ENCODE measurements at regions of chr22 and their contacts with region 1.

Region 1: DNA sequence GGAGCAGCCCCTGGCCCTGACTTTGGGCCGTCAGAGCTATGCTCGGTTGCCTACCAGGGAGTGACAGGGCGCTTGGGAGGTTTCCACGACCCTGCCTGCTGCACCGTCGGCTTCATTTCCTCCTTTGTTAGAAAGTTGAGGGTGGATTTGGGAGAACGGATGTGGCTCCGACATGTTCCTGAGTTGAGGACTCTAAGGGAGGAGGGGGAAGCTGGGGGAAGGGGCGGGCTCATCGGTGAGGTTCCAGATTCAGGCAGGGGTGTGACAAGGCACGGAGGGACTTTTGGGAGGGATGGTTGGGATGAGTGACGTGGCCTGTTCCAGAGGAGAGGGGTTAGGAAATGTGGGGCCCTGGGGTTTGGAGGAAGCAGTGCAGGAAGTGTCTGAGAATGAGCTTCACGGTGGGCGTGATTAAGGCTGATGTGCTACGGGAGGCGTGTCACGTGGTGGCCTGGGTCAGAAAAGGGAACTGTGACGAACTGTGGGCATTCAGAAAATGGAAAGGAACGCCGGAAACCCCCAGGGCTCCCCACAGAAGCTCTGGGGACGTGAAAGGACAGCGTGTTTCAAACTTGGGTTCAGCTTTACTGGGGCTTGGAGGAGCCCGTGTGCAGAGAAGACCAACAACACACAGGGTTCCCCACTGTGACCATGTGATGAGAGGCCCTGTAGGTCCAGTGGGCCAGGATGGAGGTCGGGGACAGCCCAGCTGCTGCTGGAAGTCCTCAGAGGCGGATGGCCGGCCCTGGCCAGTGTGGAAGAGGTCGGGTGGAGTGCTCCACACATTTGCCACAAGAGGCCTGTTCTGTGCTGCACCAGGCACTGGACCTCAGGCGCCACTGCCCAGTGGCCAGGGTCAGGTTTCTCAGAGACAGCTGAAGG is 2.8 kb downstream of the PARVB start:
- DNase-seq: peak; percentile 88
- H3K4me3 ChIP-seq: peak overlapping the region in 2 of 3 experiments; percentile 18 to 52
- H3K27ac ChIP-seq: peak overlapping the region; percentile 99
- H3K4me1 ChIP-seq: peaks cover 66% of the 10 kb centered on the region
- H3K27me3 ChIP-seq: no peaks in the 10 kb centered on the region
- CTCF ChIP-seq: no peak
- POLR2A ChIP-seq: peak; percentile 70

Region 2: DNA sequence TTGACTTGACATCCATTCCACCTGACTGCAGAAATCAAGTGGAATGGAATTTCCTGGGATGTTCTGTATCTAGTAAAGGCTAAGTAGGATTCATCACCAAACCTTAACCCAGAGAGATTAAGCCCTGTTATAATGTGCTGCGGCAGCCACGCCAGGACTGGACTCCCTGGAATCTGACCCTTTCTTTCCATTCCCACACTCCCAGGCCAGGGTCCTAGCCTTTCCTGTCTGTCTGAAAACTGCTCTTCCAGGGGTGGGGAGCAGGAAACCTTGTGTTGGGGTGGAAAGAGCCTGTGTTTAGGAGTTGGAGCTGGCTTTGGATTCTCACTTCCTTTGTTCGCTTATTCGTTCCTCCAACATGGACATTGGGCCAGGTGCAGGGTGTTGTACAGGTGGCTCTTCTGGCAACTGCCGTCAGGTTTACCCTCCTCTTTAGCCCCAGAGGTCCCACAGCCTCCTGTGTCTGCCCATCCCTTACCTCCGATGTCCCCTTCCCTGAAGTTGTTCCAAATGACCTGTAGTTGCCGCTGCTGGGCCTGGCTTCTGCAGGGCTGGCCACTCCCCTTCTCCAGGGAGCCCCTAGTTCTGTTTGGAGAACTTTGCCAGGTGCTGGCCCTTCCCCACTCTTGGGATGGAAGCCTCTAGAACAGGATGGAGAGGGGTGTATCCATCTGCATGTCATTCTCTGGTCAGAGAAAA is 23.3 kb before region 1 on chr22:
- CTCF ChIA-PET with region 1: interaction called, 10 read pairs
- POLR2A ChIA-PET with region 1: no interaction called
- dilution Hi-C with region 1: no loop called
- intact Hi-C with region 1: no loop called
- DNase-seq: peak; percentile 60
- H3K4me3 ChIP-seq: no peak overlapping the region
- H3K27ac ChIP-seq: no peak overlapping the region
- H3K4me1 ChIP-seq: peaks cover 14% of the 10 kb centered on the region
- H3K27me3 ChIP-seq: no peaks in the 10 kb centered on the region
- CTCF ChIP-seq: peak; percentile 37 to 64
- POLR2A ChIP-seq: no peak

Region 3: DNA sequence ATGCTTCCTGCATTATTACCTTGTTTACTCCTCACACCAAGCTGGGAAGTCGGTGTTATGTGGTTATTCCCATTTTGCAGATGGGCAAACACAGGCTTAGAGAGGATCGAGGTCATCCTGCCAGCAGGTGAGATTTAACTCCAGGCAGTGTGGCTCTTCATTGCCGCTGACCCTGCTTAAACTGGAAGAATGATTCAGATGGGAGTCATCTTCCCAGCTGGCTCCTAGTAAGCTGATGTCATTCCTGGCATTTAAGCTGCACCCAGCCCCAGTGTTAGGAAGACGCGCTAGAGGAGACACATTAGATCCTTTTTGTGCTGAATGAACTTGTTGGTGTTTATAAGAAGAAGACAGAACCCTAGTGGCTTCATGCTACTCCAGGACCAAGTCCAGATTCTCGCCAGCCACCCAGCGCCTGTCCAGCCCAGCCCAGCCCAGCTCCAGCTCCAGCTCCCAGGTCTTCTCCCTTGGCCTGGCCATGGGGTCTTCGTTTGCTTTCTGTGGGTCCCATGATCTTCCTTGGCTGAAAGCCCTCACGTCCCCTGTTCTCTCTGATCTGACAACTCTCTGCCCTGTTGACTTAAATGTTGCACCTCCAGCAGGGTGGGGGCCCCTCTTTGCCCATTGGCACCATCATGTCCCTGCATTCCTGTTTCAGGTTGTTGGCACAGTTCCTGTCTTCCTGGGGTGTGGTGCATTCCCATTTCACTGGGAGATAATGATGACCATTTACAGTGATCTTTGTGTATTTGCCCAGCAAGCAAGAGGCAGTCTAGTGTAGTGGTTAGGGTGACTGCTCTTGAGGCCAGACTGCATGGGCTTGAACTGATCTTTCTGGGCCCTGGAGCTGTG is 10.9 kb after region 1 on chr22:
- CTCF ChIA-PET with region 1: interaction called, 12 read pairs
- POLR2A ChIA-PET with region 1: interaction called, 3 read pairs
- dilution Hi-C with region 1: no loop called
- intact Hi-C with region 1: no loop called
- DNase-seq: peak; percentile 85
- H3K4me3 ChIP-seq: no peak overlapping the region
- H3K27ac ChIP-seq: peak overlapping the region; percentile 54
- H3K4me1 ChIP-seq: peaks cover 16% of the 10 kb centered on the region
- H3K27me3 ChIP-seq: no peaks in the 10 kb centered on the region
- CTCF ChIP-seq: no peak
- POLR2A ChIP-seq: no peak

Region 4: DNA sequence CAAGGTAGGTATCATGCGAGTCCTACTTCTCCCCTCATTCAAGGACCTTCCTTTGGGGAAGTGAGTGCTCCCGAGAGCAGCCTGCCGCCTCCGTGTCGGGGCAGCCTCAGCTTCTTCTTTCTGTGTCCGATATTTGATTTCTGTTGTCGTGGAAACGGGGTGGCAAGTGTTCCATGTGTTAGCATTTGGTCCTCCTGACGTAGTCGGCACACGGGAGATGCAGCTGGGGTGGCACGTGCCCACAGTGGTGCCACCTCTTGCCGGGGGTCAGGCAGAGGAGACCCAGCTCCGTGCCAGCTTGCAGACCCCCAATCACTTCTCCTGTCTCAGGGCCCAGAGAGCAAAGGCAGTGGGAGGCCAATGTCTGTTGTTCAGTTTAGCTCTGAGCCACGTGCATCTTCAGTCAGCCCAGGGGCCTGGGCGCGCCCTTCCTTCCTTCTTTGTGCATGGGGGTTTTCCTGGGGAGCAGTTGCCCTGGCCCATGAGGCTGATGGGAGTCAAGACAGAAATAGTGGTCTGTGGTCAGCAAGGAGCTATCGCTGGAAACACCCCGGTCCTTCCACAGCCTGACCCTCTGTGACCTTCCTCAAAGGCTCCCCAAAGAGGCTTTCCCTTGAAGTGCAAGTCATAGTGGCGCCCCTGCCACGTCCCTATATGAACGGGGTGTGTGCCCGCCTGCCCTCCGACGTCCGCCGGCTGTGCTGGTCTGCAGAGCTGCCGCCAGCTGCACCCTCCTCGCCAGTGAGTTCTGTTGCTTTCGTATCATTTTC is 41.7 kb after region 1 on chr22:
- CTCF ChIA-PET with region 1: interaction called, 10 read pairs
- POLR2A ChIA-PET with region 1: no interaction called
- dilution Hi-C with region 1: no loop called
- intact Hi-C with region 1: loop called (anchors 5 kb)
- DNase-seq: no peak
- H3K4me3 ChIP-seq: no peak overlapping the region
- H3K27ac ChIP-seq: no peak overlapping the region
- H3K4me1 ChIP-seq: peaks cover 18% of the 10 kb centered on the region
- H3K27me3 ChIP-seq: no peaks in the 10 kb centered on the region
- CTCF ChIP-seq: no peak
- POLR2A ChIP-seq: no peak

Region 5: GRCh38 chr22:45309472-45310227 is 1282.8 kb after region 1 on chr22 and contains the start of gene FAM118A:
- CTCF ChIA-PET with region 1: no interaction called
- POLR2A ChIA-PET with region 1: no interaction called
- dilution Hi-C with region 1: no loop called
- intact Hi-C with region 1: loop called (anchors 10 kb)
- DNase-seq: peak; percentile 91
- H3K4me3 ChIP-seq: peak within 1 kb of the TSS; percentile 74 to 98 (median 97)
- H3K27ac ChIP-seq: peak within 1 kb of the TSS; percentile 66
- H3K4me1 ChIP-seq: peaks cover 24% of the 10 kb centered on the region
- H3K27me3 ChIP-seq: no peaks in the 10 kb centered on the region
- CTCF ChIP-seq: peak in 1 of 2 donors; percentile 17
- POLR2A ChIP-seq: peak; percentile 64
- total RNA-seq, gene FAM118A: 20.2 and 44.2 TPM in 2 replicates